ENCODE measurements at regions of chr22 and their contacts with region 1.

Region 1: DNA sequence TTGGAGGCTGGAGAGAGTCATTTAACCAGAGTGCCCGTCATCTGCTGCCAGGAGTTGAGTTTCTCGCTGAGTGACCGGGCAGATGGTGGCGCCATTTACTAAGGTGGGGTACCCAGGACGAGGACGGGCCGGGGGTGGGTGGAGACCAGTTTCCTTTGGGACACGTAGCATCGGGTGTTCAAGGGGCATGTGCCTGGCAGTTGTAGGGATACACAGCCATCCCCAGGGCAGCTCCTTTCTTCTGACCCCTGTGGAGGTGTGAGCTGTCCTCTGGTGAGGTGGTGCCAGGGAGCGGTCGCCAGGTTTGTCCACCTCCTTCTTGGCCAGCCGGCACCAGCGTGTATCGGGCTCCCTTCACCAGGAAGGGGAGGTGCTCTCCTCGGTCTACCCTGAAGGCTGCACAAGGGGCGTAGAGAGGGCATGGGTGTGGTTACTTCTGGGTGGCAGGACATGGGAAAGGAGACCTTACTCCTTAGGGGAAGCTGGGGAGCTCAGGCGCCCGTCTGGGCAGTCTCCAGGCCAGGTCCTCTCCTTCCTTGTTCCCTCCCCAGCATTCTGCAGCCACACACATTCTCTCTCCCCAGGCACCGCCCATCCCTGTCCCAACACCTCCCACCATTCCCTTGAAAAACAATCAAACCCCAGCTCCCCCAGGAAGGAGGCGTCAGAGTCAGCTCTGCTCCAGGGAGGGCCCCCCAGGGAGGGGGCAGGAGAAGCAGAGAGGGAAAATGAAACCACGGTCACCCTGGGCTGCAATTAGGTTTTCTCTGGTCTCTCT is 10.3 kb upstream of the MB start:
- DNase-seq: peak; percentile 83
- H3K4me3 ChIP-seq: peak overlapping the region; percentile 64
- H3K27ac ChIP-seq: peak overlapping the region; percentile 18
- H3K4me1 ChIP-seq: peaks cover 25% of the 10 kb centered on the region
- CTCF ChIP-seq: peak; percentile 83

Region 2: GRCh38 chr22:35611891-35612576 is 15.4 kb before region 1 on chr22:
- CTCF ChIA-PET with region 1: no interaction called
- POLR2A ChIA-PET with region 1: no interaction called
- intact Hi-C with region 1: no loop called
- DNase-seq: peak; percentile 60
- H3K4me3 ChIP-seq: peak overlapping the region; percentile 27
- H3K27ac ChIP-seq: peak overlapping the region; percentile 34
- H3K4me1 ChIP-seq: peaks cover 17% of the 10 kb centered on the region
- CTCF ChIP-seq: no peak

Region 3: DNA sequence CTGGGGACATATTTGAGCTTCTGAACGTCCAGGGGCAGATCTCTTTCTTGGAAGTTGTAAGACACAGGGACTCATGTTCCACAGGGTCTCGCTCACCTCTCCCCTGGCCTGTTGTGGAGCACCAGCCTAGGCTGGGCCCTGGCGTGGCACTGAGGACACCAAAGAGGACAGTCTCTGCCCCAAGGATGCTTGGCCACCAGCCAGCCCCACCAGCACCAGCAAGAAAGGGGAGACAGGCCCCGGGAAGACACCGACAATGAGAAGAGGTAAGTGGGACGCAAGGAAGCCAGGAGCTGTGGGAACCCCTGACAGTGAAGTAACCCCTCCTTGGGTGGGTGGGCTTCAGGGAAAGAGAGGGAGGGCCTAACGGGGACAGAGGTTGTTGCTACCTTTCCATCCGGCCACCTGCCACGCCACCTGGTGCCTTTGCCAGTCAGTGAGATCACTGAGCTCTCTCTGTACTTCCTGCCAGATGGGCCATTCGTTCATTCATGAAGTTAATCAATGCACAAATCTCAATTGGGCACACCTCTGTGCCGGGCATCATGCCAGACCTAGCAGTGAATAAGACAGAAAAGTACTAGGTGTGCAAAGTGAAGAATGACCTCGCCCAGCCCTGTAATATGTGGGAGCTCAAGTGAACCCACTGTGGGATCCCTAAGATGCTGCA is 101.3 kb after region 1 on chr22:
- CTCF ChIA-PET with region 1: no interaction called
- POLR2A ChIA-PET with region 1: no interaction called
- intact Hi-C with region 1: loop called (anchors 2 kb)
- DNase-seq: peak; percentile 91
- H3K4me3 ChIP-seq: peak overlapping the region; percentile 67
- H3K27ac ChIP-seq: peak overlapping the region; percentile 91
- H3K4me1 ChIP-seq: peaks cover 68% of the 10 kb centered on the region
- CTCF ChIP-seq: peak; percentile 42

Region 4: GRCh38 chr22:35840302-35840739 is 212.9 kb after region 1 on chr22:
- CTCF ChIA-PET with region 1: no interaction called
- POLR2A ChIA-PET with region 1: interaction called, 4 read pairs
- intact Hi-C with region 1: loop called (anchors 1 kb)
- DNase-seq: peak; percentile 74
- H3K4me3 ChIP-seq: peak overlapping the region; percentile 74
- H3K27ac ChIP-seq: peak overlapping the region; percentile 67
- H3K4me1 ChIP-seq: peaks cover 81% of the 10 kb centered on the region
- CTCF ChIP-seq: no peak

Region 5: GRCh38 chr22:36065775-36066559 is 438.5 kb after region 1 on chr22:
- CTCF ChIA-PET with region 1: no interaction called
- POLR2A ChIA-PET with region 1: no interaction called
- intact Hi-C with region 1: loop called (anchors 1 kb)
- DNase-seq: peak; percentile 81
- H3K4me3 ChIP-seq: peak overlapping the region; percentile 65
- H3K27ac ChIP-seq: no peak overlapping the region
- H3K4me1 ChIP-seq: peaks cover 10% of the 10 kb centered on the region
- CTCF ChIP-seq: peak; percentile 100

Region 6: DNA sequence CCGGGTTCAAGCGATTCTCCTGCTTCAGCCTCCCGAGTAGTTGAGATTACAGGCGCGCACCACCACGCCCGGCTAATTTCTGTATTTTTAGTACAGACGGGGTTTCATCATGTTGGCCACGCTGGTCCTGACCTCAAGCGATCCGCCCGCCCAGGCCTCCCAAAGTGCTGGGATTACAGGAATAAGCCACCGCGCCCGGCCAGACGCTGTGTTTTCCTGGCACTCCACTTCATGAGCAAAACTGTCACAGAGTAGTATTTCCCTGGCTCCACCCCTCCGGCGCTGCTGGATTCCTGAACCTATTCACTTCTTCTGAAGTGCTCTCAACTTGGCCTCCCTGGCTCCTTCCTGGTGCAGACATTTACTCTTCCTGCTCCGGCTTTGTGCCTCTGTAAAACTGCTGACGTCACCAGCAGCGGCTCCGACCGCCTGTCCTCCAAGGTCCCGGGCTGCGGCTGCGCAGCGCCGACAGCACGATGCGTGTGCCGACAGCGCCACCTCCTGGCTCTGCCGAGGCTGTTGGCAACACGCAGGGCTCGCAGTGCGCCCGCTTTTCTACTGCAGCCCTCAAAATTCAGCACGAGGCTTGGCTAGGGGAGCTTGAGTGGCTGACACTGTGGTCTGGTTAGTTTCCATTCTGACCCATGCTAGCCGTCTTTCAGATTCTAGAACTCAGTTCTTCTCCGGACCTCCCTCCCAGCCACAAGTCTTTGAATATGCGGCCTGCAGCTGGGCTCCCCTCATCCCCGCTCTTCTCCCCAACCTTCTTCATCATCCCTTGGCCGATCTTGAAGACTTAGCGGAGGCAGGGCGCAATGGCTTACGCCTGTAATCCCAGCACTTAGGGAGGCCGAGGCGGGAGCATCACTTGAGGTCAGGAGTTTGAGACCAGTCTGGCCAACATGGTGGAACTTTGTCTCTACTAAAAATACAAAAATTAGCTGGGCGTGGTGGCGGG is 496.5 kb after region 1 on chr22:
- CTCF ChIA-PET with region 1: no interaction called
- POLR2A ChIA-PET with region 1: no interaction called
- intact Hi-C with region 1: loop called (anchors 1 kb)
- DNase-seq: peak; percentile 95
- H3K4me3 ChIP-seq: no peak overlapping the region
- H3K27ac ChIP-seq: no peak overlapping the region
- H3K4me1 ChIP-seq: peaks cover 3% of the 10 kb centered on the region
- CTCF ChIP-seq: peak; percentile 99

Measured in OCI-LY7 (cell line).